CD8-positive, alpha-beta memory T cell (primary cell): ENCODE measurements at regions of chr11 and their contacts with region 1.

Region 1: DNA sequence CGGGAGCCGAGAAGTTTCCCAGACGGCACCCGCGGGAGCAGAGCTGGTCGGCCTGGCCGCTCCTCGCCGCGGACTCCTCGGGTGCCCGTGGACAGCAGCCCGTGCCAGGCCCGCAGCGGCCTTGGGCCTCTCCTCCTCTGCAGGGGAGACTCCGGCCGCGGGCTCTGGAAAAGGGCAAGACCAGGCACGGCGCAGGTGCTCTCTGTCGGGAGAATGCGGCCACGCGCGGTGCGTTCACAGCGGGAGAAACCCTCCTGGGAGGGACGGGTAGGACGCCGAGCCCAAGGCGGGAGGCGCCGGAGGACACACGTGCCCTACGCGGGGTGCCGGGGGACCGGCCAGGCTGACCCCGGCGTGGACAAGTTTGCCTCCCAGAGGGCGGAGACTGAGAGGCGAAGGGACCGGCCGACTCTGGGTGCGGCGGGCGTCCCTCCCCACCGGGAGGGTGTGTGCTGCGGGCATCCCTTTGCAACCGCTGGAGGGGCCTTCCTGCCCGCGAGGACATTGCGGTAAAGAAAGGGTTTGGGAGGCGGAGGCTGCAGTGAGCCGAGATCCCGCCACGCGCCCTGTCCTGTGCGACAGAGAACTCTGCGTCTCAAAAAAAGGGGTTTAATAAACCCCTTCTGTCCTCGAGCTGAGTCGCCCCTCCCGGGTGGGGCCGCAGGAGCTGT is 2.3 kb downstream of the IFITM1 start:
- DNase-seq: peak in 2 of 5 donors; percentile 35 to 54
- H3K4me3 ChIP-seq: peak overlapping the region; percentile 98
- H3K4me3 Mint-ChIP-seq: peak overlapping the region; percentile 85 to 99 (median 91)
- H3K27ac ChIP-seq: peak overlapping the region; percentile 88
- H3K27ac Mint-ChIP-seq: peak overlapping the region; percentile 90 to 100 (median 98)
- H3K4me1 ChIP-seq: peaks cover 37% of the 10 kb centered on the region
- H3K4me1 Mint-ChIP-seq: peaks cover 49 to 65% (median 58%) of the 10 kb centered on the region in 3 donors
- H3K27me3 ChIP-seq: no peaks in the 10 kb centered on the region
- H3K27me3 Mint-ChIP-seq: peaks cover 0 to 6% of the 10 kb centered on the region in 2 donors

Region 2: GRCh38 chr11:288328-289144 is 27.6 kb before region 1 on chr11 and contains the start of gene PGGHG:
- CTCF ChIA-PET with region 1: interaction called, 5 read pairs
- POLR2A ChIA-PET with region 1: interaction called, 10 read pairs
- DNase-seq: peak; percentile 55 to 71 (median 67)
- H3K4me3 ChIP-seq: peak within 1 kb of the TSS; percentile 74
- H3K4me3 Mint-ChIP-seq: peak within 1 kb of the TSS; percentile 94 to 99 (median 98)
- H3K27ac ChIP-seq: peak within 1 kb of the TSS; percentile 79
- H3K27ac Mint-ChIP-seq: peak within 1 kb of the TSS; percentile 93 to 99 (median 97)
- H3K4me1 ChIP-seq: peaks cover 27% of the 10 kb centered on the region
- H3K4me1 Mint-ChIP-seq: peaks cover 29 to 59% (median 35%) of the 10 kb centered on the region in 3 donors
- H3K27me3 ChIP-seq: no peaks in the 10 kb centered on the region
- H3K27me3 Mint-ChIP-seq: peaks cover 0 to 9% of the 10 kb centered on the region in 2 donors
- total RNA-seq, gene PGGHG: 81.0 to 81.2 TPM

Region 3: GRCh38 chr11:326842-327580 is 10.8 kb after region 1 on chr11:
- CTCF ChIA-PET with region 1: interaction called, 12 read pairs
- POLR2A ChIA-PET with region 1: interaction called, 7 read pairs
- DNase-seq: peak; percentile 48 to 86 (median 77)
- H3K4me3 ChIP-seq: peak overlapping the region; percentile 55
- H3K4me3 Mint-ChIP-seq: peak overlapping the region; percentile 27 to 81 (median 73)
- H3K27ac ChIP-seq: peak overlapping the region; percentile 78
- H3K27ac Mint-ChIP-seq: peak overlapping the region; percentile 90 to 99 (median 95)
- H3K4me1 ChIP-seq: peaks cover 61% of the 10 kb centered on the region
- H3K4me1 Mint-ChIP-seq: peaks cover 62 to 73% (median 64%) of the 10 kb centered on the region in 3 donors
- H3K27me3 ChIP-seq: no peaks in the 10 kb centered on the region
- H3K27me3 Mint-ChIP-seq: no peaks in the 10 kb centered on the region

Region 4: DNA sequence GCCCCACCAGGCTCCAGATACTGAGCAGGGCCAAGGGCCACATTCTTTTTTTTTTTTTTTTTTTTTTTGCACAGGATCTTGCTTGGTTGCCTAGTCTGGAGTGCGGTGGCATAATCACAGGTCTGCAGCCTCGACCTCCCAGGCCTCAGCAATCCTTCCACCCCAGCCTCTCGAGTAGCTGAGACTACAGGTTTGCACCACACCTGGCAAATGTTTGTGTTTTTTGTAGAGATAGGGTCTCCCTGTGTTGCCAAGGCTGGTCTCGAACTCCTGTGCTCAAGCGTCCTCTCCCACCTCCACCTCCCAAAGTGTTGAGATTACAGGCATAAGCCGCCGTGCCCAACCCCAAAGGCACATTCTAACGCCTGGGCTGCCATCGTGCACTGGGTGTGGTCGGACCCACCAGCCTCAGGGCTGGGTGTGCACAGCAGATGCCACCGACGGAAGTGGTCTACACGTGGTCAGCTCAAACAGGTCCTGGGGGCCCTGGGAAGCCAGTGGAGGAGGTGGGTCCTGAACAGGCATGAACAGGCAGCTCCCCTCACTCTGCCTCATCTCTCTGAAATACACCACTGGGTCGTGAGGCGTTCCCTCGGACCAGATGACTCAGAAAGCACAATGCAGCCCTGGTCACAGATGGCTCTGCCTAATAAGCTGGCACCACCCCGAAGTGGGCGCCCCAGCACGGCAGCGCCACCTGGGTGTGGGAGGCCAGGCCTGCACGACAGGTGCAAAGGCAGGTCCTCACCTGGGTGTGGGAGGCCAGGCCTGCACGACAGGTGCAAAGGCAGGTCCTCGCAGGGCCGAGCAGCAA is 48.0 kb after region 1 on chr11:
- CTCF ChIA-PET with region 1: interaction called, 17 read pairs
- POLR2A ChIA-PET with region 1: interaction called, 3 read pairs
- DNase-seq: peak; percentile 58 to 81 (median 65)
- H3K4me3 ChIP-seq: peak overlapping the region; percentile 20
- H3K4me3 Mint-ChIP-seq: peak overlapping the region in 6 of 7 donors; percentile 17 to 74 (median 40)
- H3K27ac ChIP-seq: no peak overlapping the region
- H3K27ac Mint-ChIP-seq: peak overlapping the region in 6 of 8 donors; percentile 58 to 79 (median 68)
- H3K4me1 ChIP-seq: peaks cover 28% of the 10 kb centered on the region
- H3K4me1 Mint-ChIP-seq: peaks cover 19 to 27% (median 21%) of the 10 kb centered on the region in 3 donors
- H3K27me3 ChIP-seq: peaks cover 24% of the 10 kb centered on the region
- H3K27me3 Mint-ChIP-seq: peaks cover 23 to 31% of the 10 kb centered on the region in 2 donors